ENCODE measurements at regions of chr2 and their contacts with region 1.

Region 1: GRCh38 chr2:135531231-135532228 is at the start of gene R3HDM1:
- DNase-seq: peak; percentile 96
- H3K4me3 Mint-ChIP-seq: no peak within 1 kb of the TSS
- H3K27ac Mint-ChIP-seq: no peak within 1 kb of the TSS
- H3K4me1 Mint-ChIP-seq: peaks cover 27% of the 10 kb centered on the region
- H3K27me3 Mint-ChIP-seq: no peaks in the 10 kb centered on the region
- total RNA-seq, gene R3HDM1: 47.8 and 49.2 TPM in 2 replicates

Region 2: DNA sequence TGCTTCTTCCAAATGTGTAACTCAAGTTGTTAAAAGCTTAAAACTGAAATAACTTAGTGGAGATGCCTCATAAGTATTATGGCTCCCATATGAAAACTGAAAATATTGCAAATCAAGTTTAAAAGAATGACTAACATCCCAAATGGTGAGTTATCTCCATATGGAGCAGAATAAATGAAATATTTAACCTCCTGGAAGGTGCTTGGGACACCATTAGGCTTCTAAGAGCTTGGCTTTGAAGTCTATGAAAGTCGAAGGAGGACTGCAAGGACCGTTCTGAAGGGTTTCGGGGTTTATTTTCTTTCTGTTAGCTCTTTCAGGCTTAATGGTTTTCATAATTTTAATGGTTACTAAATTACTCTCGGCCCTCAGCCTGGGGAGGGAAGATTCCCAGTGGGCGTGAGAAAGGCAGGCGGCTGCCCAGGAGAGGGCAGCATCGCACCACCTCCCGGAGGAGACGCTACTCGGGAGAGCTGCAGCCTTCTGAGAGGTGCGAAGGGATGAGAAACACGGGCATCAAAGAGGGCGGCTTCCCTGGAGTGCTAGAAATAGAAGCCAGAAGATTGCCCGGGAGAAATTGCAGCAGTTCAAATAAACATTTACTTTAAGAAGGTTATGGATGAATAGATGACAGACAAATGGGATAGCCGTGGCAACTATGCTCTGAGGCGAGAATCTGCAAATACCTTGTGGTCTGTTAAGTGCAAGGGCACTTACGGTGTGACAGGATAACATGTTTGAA is 527.4 kb before region 1 on chr2:
- intact Hi-C with region 1: loop called (anchors 2 kb)
- DNase-seq: peak; percentile 57
- H3K4me3 Mint-ChIP-seq: no peak overlapping the region
- H3K27ac Mint-ChIP-seq: no peak overlapping the region
- H3K4me1 Mint-ChIP-seq: peaks cover 4% of the 10 kb centered on the region
- H3K27me3 Mint-ChIP-seq: peaks cover 28% of the 10 kb centered on the region

Region 3: GRCh38 chr2:135245055-135245454 is 286.5 kb before region 1 on chr2:
- intact Hi-C with region 1: loop called (anchors 5 kb)
- DNase-seq: peak; percentile 16
- H3K4me3 Mint-ChIP-seq: no peak overlapping the region
- H3K27ac Mint-ChIP-seq: peak overlapping the region; percentile 82
- H3K4me1 Mint-ChIP-seq: peaks cover 24% of the 10 kb centered on the region
- H3K27me3 Mint-ChIP-seq: no peaks in the 10 kb centered on the region

Region 4: DNA sequence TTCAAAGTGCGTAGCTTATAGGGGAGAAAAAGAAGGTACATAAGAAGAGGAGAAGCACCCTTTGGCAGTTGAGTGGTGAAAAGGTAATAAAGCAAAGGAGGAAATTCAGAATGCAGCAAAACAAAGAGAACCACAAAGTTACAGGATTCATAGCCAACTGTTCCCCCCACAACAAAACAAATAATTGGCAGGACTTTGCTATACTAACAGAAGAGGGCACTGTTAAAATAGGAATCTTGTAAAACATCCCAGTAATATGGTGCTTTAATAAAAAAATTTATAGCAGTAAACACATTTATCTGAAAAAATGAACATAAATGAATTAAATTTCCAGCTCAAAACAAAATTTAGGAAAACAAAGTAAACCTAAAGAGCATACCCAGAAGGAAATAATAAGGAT is 42.1 kb after region 1 on chr2:
- intact Hi-C with region 1: no loop called
- DNase-seq: no peak
- H3K4me3 Mint-ChIP-seq: no peak overlapping the region
- H3K27ac Mint-ChIP-seq: no peak overlapping the region
- H3K4me1 Mint-ChIP-seq: peaks cover 3% of the 10 kb centered on the region
- H3K27me3 Mint-ChIP-seq: no peaks in the 10 kb centered on the region

Region 5: GRCh38 chr2:135664623-135665068 is 133.1 kb after region 1 on chr2:
- intact Hi-C with region 1: loop called (anchors 5 kb)
- DNase-seq: no peak
- H3K4me3 Mint-ChIP-seq: no peak overlapping the region
- H3K27ac Mint-ChIP-seq: peak overlapping the region; percentile 77
- H3K4me1 Mint-ChIP-seq: peaks cover 37% of the 10 kb centered on the region
- H3K27me3 Mint-ChIP-seq: no peaks in the 10 kb centered on the region

Region 6: GRCh38 chr2:135741395-135742324 is 210.1 kb after region 1 on chr2 and contains the start of gene UBXN4:
- intact Hi-C with region 1: loop called (anchors 1 kb)
- DNase-seq: peak; percentile 90
- H3K4me3 Mint-ChIP-seq: peak within 1 kb of the TSS; percentile 98
- H3K27ac Mint-ChIP-seq: peak within 1 kb of the TSS; percentile 100
- H3K4me1 Mint-ChIP-seq: peaks cover 34% of the 10 kb centered on the region
- H3K27me3 Mint-ChIP-seq: no peaks in the 10 kb centered on the region
- total RNA-seq, gene UBXN4: 118 and 138 TPM in 2 replicates

Region 7: DNA sequence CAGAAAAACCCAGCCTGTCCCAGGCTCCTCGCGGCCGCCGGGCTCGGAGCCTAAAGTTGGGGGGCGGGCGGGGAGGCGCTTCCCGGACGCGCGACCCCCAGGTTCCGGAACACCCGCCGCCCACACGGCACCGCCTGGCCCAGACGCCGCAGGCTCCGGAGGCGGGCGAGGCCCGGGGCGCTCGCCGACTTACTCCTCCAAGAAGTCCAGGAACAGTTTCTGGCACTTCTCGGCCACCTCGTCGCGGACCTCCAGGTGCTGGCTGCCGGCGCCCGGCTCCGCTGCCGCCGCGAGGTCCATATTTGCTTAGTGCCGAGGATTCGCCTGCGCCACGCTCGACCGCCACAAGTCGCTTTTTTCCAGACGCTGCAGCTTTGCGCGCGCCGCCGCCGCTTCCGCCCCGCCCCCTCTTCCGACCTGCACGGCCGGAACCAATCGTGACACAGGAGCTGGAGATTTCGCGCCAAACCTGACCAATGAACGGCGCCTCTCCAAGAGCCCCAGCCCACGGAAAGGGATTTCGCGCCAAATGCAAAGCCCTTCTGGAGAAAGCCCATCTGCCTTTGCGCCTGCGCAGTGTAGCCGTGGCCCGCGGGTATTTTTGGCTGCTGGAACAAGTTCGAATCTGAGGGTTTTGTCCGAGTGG is 344.7 kb after region 1 on chr2 and contains the start of gene MCM6:
- intact Hi-C with region 1: loop called (anchors 2 kb)
- DNase-seq: peak; percentile 98
- H3K4me3 Mint-ChIP-seq: peak within 1 kb of the TSS; percentile 95
- H3K27ac Mint-ChIP-seq: peak within 1 kb of the TSS; percentile 92
- H3K4me1 Mint-ChIP-seq: peaks cover 37% of the 10 kb centered on the region
- H3K27me3 Mint-ChIP-seq: no peaks in the 10 kb centered on the region
- total RNA-seq, gene MCM6: 190 and 191 TPM in 2 replicates

Region 8: GRCh38 chr2:136538489-136538888 is 1007.0 kb after region 1 on chr2:
- intact Hi-C with region 1: no loop called
- DNase-seq: no peak
- H3K4me3 Mint-ChIP-seq: no peak overlapping the region
- H3K27ac Mint-ChIP-seq: no peak overlapping the region
- H3K4me1 Mint-ChIP-seq: no peaks in the 10 kb centered on the region
- H3K27me3 Mint-ChIP-seq: no peaks in the 10 kb centered on the region

Measured in activated T-helper 2 cell treated with anti-CD3 and anti-CD28 coated beads, Interferon-gamma antibody, Interleukin-2, Interleukin-4, amounts not matched to agents 10 μg/mL and 5 μg/mL and 100 μg/mL, durations not matched to agents 14 hours and 24 hours and 36 hours (primary cell).